ENCODE measurements at regions of chr7 and their contacts with region 1.

Region 1: GRCh38 chr7:100428199-100428966 is at the start of gene ZCWPW1:
- DNase-seq: peak; percentile 91
- ATAC-seq: peak; percentile 67
- H3K4me3 ChIP-seq: peak within 1 kb of the TSS; percentile 75 to 87 (median 83)
- H3K27ac ChIP-seq: peak within 1 kb of the TSS; percentile 98
- H3K4me1 ChIP-seq: peaks cover 37% of the 10 kb centered on the region
- H3K27me3 ChIP-seq: no peaks in the 10 kb centered on the region; a peak in 1 of 5 replicates
- CTCF ChIP-seq: peak; percentile 25
- EP300 ChIP-seq: no peak; a peak in 1 of 4 replicates
- POLR2A ChIP-seq: peak in 1 of 2 experiments; percentile 98; a peak in 2 of 4 replicates
- RAD21 ChIP-seq: peak; percentile 15; the same call in 1 of the 2 replicates
- total RNA-seq, gene ZCWPW1: 2.5 and 2.6 TPM in 2 replicates

Region 2: GRCh38 chr7:100148559-100149350 is 279.6 kb before region 1 on chr7 and contains the start of gene LAMTOR4:
- CTCF ChIA-PET with region 1: no interaction called
- POLR2A ChIA-PET with region 1: interaction called, 14 read pairs
- in situ Hi-C with region 1: no loop called
- intact Hi-C with region 1: no loop called
- DNase-seq: peak; percentile 98
- ATAC-seq: peak; percentile 98
- H3K4me3 ChIP-seq: peak within 1 kb of the TSS; percentile 96 to 97 (median 97)
- H3K27ac ChIP-seq: peak within 1 kb of the TSS; percentile 46
- H3K4me1 ChIP-seq: peaks cover 45% of the 10 kb centered on the region
- H3K27me3 ChIP-seq: no peaks in the 10 kb centered on the region
- CTCF ChIP-seq: no peak
- EP300 ChIP-seq: no peak; a peak in 1 of 4 replicates
- POLR2A ChIP-seq: peak in 1 of 2 experiments; percentile 92
- RAD21 ChIP-seq: no peak
- total RNA-seq, gene LAMTOR4: 115 and 120 TPM in 2 replicates

Region 3: GRCh38 chr7:100397315-100398081 is 30.9 kb before region 1 on chr7:
- CTCF ChIA-PET with region 1: no interaction called
- POLR2A ChIA-PET with region 1: interaction called, 10 read pairs
- in situ Hi-C with region 1: no loop called
- intact Hi-C with region 1: no loop called
- DNase-seq: no peak
- ATAC-seq: peak; percentile 69
- H3K4me3 ChIP-seq: no peak overlapping the region
- H3K27ac ChIP-seq: no peak overlapping the region
- H3K4me1 ChIP-seq: peaks cover 17% of the 10 kb centered on the region
- H3K27me3 ChIP-seq: peaks cover 2 to 3% of the 10 kb centered on the region in 2 experiments; a peak in 2 of 5 replicates
- CTCF ChIP-seq: peak; percentile 19
- EP300 ChIP-seq: no peak
- POLR2A ChIP-seq: no peak
- RAD21 ChIP-seq: no peak

Region 4: GRCh38 chr7:100456558-100456957 is 28.2 kb after region 1 on chr7:
- CTCF ChIA-PET with region 1: no interaction called
- POLR2A ChIA-PET with region 1: interaction called, 31 read pairs
- in situ Hi-C with region 1: no loop called
- intact Hi-C with region 1: no loop called
- DNase-seq: no peak
- ATAC-seq: no peak
- H3K4me3 ChIP-seq: no peak overlapping the region
- H3K27ac ChIP-seq: no peak overlapping the region
- H3K4me1 ChIP-seq: peaks cover 21% of the 10 kb centered on the region
- H3K27me3 ChIP-seq: peaks cover 0 to 17% of the 10 kb centered on the region in 2 experiments; a peak in 2 of 5 replicates
- CTCF ChIP-seq: peak; percentile 21
- EP300 ChIP-seq: no peak
- POLR2A ChIP-seq: no peak
- RAD21 ChIP-seq: no peak

Region 5: GRCh38 chr7:100545360-100546128 is 117.2 kb after region 1 on chr7:
- CTCF ChIA-PET with region 1: no interaction called
- POLR2A ChIA-PET with region 1: interaction called, 19 read pairs
- in situ Hi-C with region 1: no loop called
- intact Hi-C with region 1: no loop called
- DNase-seq: peak; percentile 95
- ATAC-seq: peak; percentile 87
- H3K4me3 ChIP-seq: peak overlapping the region; percentile 17 to 39 (median 23); a peak in 5 of 6 replicates
- H3K27ac ChIP-seq: peak overlapping the region; percentile 94
- H3K4me1 ChIP-seq: peaks cover 91% of the 10 kb centered on the region
- H3K27me3 ChIP-seq: no peaks in the 10 kb centered on the region
- CTCF ChIP-seq: peak; percentile 44
- EP300 ChIP-seq: peak in 1 of 2 experiments; percentile 68; a peak in 2 of 4 replicates
- POLR2A ChIP-seq: peak in 1 of 2 experiments; percentile 58; a peak in 1 of 4 replicates
- RAD21 ChIP-seq: peak; percentile 29; the same call in 1 of the 2 replicates